Adrenal gland (tissue), 19 donors: ENCODE measurements at regions of chr1 and their contacts with region 1.

Region 1: GRCh38 chr1:212561501-212561931 is 47.0 kb upstream of the ATF3 start:
- DNase-seq: peak; percentile 66 to 81 (median 72)
- H3K4me3 ChIP-seq: no peak overlapping the region
- H3K27ac ChIP-seq: peak overlapping the region in 4 of 5 donors; percentile 62 to 94 (median 81)
- H3K4me1 ChIP-seq: peaks cover 0 to 10% of the 10 kb centered on the region in 2 donors
- H3K27me3 ChIP-seq: no peaks in the 10 kb centered on the region
- CTCF ChIP-seq: no peak
- POLR2A ChIP-seq: peak in 1 of 2 donors; percentile 43

Region 2: GRCh38 chr1:212124690-212125582 is 436.6 kb before region 1 on chr1:
- intact Hi-C with region 1: no loop called
- DNase-seq: peak in 2 of 7 donors; percentile 3 to 32
- H3K4me3 ChIP-seq: no peak overlapping the region
- H3K27ac ChIP-seq: no peak overlapping the region
- H3K4me1 ChIP-seq: no peaks in the 10 kb centered on the region
- H3K27me3 ChIP-seq: no peaks in the 10 kb centered on the region
- CTCF ChIP-seq: no peak
- POLR2A ChIP-seq: no peak

Region 3: GRCh38 chr1:212469701-212470458 is 91.6 kb before region 1 on chr1:
- intact Hi-C with region 1: no loop called
- DNase-seq: peak; percentile 80 to 98 (median 97)
- H3K4me3 ChIP-seq: no peak overlapping the region
- H3K27ac ChIP-seq: peak overlapping the region in 4 of 5 donors; percentile 33 to 91 (median 76)
- H3K4me1 ChIP-seq: peaks cover 0 to 4% of the 10 kb centered on the region in 2 donors
- H3K27me3 ChIP-seq: no peaks in the 10 kb centered on the region
- CTCF ChIP-seq: no peak
- POLR2A ChIP-seq: peak in 1 of 2 donors; percentile 51

Region 4: GRCh38 chr1:212608209-212608955 is 46.9 kb after region 1 on chr1 and contains the start of gene ATF3:
- intact Hi-C with region 1: loop called in 1 of 2 experiments (anchors 5 kb)
- DNase-seq: peak; percentile 99 to 100 (median 100)
- H3K4me3 ChIP-seq: peak within 1 kb of the TSS; percentile 7 to 68 (median 34)
- H3K27ac ChIP-seq: peak within 1 kb of the TSS; percentile 55 to 98 (median 92)
- H3K4me1 ChIP-seq: peaks cover 14 to 31% of the 10 kb centered on the region in 2 donors
- H3K27me3 ChIP-seq: peaks cover 16% of the 10 kb centered on the region
- CTCF ChIP-seq: peak in 2 of 6 experiments; percentile 3 to 4
- POLR2A ChIP-seq: peak; percentile 99
- total RNA-seq, gene ATF3: 1.9 to 13.4 (median 7.2) TPM